ENCODE measurements at regions of chr4 and their contacts with region 1.

Region 1: DNA sequence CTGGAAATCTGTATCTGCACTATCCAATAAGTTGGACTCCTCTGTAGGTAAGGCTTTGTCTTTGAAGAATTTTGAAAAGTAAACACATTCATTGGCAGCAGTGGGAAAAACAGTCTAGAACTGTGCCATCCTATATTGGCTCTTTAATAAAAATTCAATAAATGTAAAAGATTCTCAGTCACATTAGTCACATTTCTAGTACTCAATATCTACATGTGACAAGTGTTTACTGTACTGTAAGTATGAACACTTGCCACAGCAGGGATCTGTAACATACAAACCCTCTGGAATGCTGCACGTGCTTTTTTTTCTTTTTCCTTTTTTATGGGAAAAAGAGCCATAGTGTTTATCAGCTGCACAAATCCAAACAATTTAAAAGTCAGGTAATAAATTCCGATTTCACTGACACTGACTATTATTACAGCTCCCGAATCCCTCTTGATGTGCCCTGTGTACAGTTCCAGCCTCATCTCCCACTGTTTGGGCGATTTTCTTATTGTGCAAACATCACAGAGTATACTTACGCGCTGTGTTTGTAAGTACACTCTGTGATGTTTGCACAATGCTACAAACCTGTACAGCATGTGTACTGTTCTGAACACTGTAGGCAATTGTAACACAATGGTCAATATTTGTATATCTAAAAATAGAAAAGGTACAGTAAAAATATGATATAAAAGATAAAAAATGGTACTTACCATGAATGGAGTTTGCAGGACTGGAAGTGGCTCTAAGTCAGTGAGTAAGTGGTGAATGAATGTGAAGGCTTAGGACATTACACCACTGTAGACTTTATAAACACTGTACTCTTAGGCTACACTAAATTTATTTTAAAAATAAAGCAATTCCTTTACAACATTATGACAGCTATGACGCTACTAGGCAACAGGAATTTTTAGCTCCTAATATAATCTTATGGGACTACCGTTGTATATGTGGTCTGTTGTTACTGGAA is 8.7 kb downstream of the PYURF start:
- DNase-seq: no peak
- H3K4me3 ChIP-seq: no peak overlapping the region
- H3K27ac ChIP-seq: no peak overlapping the region
- H3K4me1 ChIP-seq: peaks cover 0 to 6% (median 4%) of the 10 kb centered on the region in 4 donors
- H3K27me3 ChIP-seq: no peaks in the 10 kb centered on the region
- CTCF ChIP-seq: no peak
- EP300 ChIP-seq: no peak
- POLR2A ChIP-seq: no peak

Region 2: GRCh38 chr4:87949961-87950360 is 564.9 kb before region 1 on chr4:
- intact Hi-C with region 1: no loop called
- DNase-seq: no peak
- H3K4me3 ChIP-seq: no peak overlapping the region
- H3K27ac ChIP-seq: no peak overlapping the region
- H3K4me1 ChIP-seq: peaks cover 5 to 14% (median 12%) of the 10 kb centered on the region in 4 donors
- H3K27me3 ChIP-seq: no peaks in the 10 kb centered on the region
- CTCF ChIP-seq: no peak
- EP300 ChIP-seq: no peak
- POLR2A ChIP-seq: no peak

Region 3: DNA sequence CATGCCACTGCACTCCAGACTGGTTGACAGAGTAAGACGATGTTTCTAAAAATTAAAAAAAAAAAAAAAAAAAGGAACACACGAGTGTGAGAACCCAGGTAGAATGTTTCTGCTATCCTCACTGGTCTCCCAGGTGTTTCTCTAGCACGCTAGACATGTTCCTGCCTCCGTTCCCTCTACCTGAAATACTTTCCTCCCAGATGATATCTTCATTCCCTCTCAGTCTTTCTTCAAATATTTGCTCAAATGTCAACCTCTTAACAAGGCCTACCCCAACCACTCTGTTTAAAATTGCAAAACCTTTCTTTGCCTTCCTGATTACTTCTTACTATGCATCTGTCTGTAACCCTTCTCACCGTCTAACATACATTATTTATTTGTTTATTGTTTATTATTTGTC is 296.9 kb before region 1 on chr4:
- intact Hi-C with region 1: loop called (anchors 2 kb)
- DNase-seq: peak; percentile 5
- H3K4me3 ChIP-seq: no peak overlapping the region
- H3K27ac ChIP-seq: no peak overlapping the region
- H3K4me1 ChIP-seq: peaks cover 0 to 3% (median 2%) of the 10 kb centered on the region in 4 donors
- H3K27me3 ChIP-seq: no peaks in the 10 kb centered on the region
- CTCF ChIP-seq: no peak
- EP300 ChIP-seq: no peak
- POLR2A ChIP-seq: no peak

Region 4: DNA sequence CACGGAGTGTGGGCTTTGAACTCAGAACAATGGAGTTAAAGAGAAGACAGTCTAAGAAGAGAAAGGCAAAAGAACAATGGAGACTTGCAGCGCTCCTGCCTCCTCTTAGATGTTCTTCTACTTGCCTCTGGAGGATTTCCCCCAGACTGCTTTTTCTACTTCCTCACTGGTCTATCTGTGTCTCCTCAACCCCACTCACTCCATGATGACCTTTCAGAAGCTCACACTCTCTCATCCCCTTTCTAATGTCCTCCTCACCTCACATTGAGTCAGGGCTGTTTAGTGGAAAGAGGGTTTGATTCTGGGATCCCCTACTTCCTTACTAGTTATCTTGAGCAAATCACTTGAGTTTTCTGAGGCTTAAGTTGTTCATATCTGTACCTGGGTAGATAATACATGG is 148.4 kb before region 1 on chr4:
- intact Hi-C with region 1: loop called (anchors 5 kb)
- DNase-seq: peak; percentile 21
- H3K4me3 ChIP-seq: no peak overlapping the region
- H3K27ac ChIP-seq: no peak overlapping the region
- H3K4me1 ChIP-seq: no peaks in the 10 kb centered on the region
- H3K27me3 ChIP-seq: no peaks in the 10 kb centered on the region
- CTCF ChIP-seq: no peak
- EP300 ChIP-seq: no peak
- POLR2A ChIP-seq: no peak

Region 5: GRCh38 chr4:88378691-88379559 is 135.9 kb before region 1 on chr4 and contains the start of gene HERC6:
- intact Hi-C with region 1: loop called (anchors 5 kb)
- DNase-seq: no peak
- H3K4me3 ChIP-seq: peak within 1 kb of the TSS; percentile 76 to 100 (median 86)
- H3K27ac ChIP-seq: peak within 1 kb of the TSS; percentile 82 to 94 (median 87)
- H3K4me1 ChIP-seq: peaks cover 0 to 10% (median 5%) of the 10 kb centered on the region in 4 donors
- H3K27me3 ChIP-seq: no peaks in the 10 kb centered on the region
- CTCF ChIP-seq: peak; percentile 58 to 80 (median 66)
- EP300 ChIP-seq: no peak
- POLR2A ChIP-seq: no peak
- total RNA-seq, gene HERC6: 3.8 to 5.2 (median 4.9) TPM